CD4-positive, alpha-beta memory T cell (primary cell): ENCODE measurements at regions of chr19 and their contacts with region 1.

Region 1: GRCh38 chr19:39052243-39052746 is 19.9 kb upstream of the FBXO27 start:
- DNase-seq: peak; percentile 58 to 68 (median 62)
- H3K4me3 ChIP-seq: no peak overlapping the region
- H3K4me3 Mint-ChIP-seq: no peak overlapping the region
- H3K27ac ChIP-seq: no peak overlapping the region
- H3K27ac Mint-ChIP-seq: peak overlapping the region in 3 of 7 donors; percentile 29 to 85 (median 77)
- H3K4me1 ChIP-seq: no peaks in the 10 kb centered on the region
- H3K4me1 Mint-ChIP-seq: peaks cover 0 to 3% (median 0%) of the 10 kb centered on the region in 4 donors
- H3K27me3 ChIP-seq: no peaks in the 10 kb centered on the region
- H3K27me3 Mint-ChIP-seq: peaks cover 0 to 2% of the 10 kb centered on the region in 2 donors

Region 2: GRCh38 chr19:39078436-39079200 is 26.3 kb after region 1 on chr19:
- CTCF ChIA-PET with region 1: interaction called, 8 read pairs
- POLR2A ChIA-PET with region 1: interaction called, 7 read pairs
- intact Hi-C with region 1: loop called (anchors 1 kb)
- DNase-seq: no peak
- H3K4me3 ChIP-seq: no peak overlapping the region
- H3K4me3 Mint-ChIP-seq: no peak overlapping the region
- H3K27ac ChIP-seq: no peak overlapping the region
- H3K27ac Mint-ChIP-seq: peak overlapping the region in 1 of 7 donors; percentile 12
- H3K4me1 ChIP-seq: peaks cover 20% of the 10 kb centered on the region
- H3K4me1 Mint-ChIP-seq: peaks cover 14 to 28% (median 23%) of the 10 kb centered on the region in 4 donors
- H3K27me3 ChIP-seq: peaks cover 15% of the 10 kb centered on the region
- H3K27me3 Mint-ChIP-seq: peaks cover 20 to 21% of the 10 kb centered on the region in 2 donors

Region 3: GRCh38 chr19:39110263-39110967 is 58.1 kb after region 1 on chr19:
- CTCF ChIA-PET with region 1: interaction called, 18 read pairs
- POLR2A ChIA-PET with region 1: no interaction called
- intact Hi-C with region 1: loop called (anchors 1 kb)
- DNase-seq: peak; percentile 43 to 61 (median 61)
- H3K4me3 ChIP-seq: no peak overlapping the region
- H3K4me3 Mint-ChIP-seq: no peak overlapping the region
- H3K27ac ChIP-seq: no peak overlapping the region
- H3K27ac Mint-ChIP-seq: peak overlapping the region in 3 of 7 donors; percentile 2 to 80 (median 42)
- H3K4me1 ChIP-seq: no peaks in the 10 kb centered on the region
- H3K4me1 Mint-ChIP-seq: peaks cover 0 to 4% (median 3%) of the 10 kb centered on the region in 4 donors
- H3K27me3 ChIP-seq: no peaks in the 10 kb centered on the region
- H3K27me3 Mint-ChIP-seq: peaks cover 3% of the 10 kb centered on the region in 2 donors

Region 4: DNA sequence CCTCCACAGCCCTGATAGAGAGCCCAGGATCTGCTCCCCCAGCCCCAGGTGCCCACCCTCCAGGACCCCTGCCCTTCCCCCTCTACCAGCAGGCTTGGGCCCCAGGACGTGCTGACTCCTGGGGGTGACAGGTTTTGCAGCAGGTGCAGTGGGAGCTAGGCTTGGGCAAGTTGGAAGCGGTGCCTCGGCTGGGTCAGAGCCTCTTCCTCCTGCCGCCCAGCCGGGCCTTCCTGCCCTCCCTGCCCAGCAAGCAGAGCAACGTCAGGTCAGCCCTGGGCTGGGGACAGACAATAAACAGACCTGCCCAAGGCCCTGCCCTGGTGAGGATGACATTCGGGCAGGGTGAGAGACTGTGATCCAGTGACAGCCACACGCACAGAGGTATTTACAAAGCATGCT is 135.3 kb after region 1 on chr19:
- CTCF ChIA-PET with region 1: interaction called, 8 read pairs
- POLR2A ChIA-PET with region 1: no interaction called
- intact Hi-C with region 1: loop called (anchors 1 kb)
- DNase-seq: no peak
- H3K4me3 ChIP-seq: no peak overlapping the region
- H3K4me3 Mint-ChIP-seq: no peak overlapping the region
- H3K27ac ChIP-seq: no peak overlapping the region
- H3K27ac Mint-ChIP-seq: no peak overlapping the region
- H3K4me1 ChIP-seq: no peaks in the 10 kb centered on the region
- H3K4me1 Mint-ChIP-seq: peaks cover 0 to 4% (median 2%) of the 10 kb centered on the region in 4 donors
- H3K27me3 ChIP-seq: peaks cover 3% of the 10 kb centered on the region
- H3K27me3 Mint-ChIP-seq: peaks cover 8 to 10% of the 10 kb centered on the region in 2 donors